ENCODE measurements at regions of chr16 and their contacts with region 1.

Region 1: DNA sequence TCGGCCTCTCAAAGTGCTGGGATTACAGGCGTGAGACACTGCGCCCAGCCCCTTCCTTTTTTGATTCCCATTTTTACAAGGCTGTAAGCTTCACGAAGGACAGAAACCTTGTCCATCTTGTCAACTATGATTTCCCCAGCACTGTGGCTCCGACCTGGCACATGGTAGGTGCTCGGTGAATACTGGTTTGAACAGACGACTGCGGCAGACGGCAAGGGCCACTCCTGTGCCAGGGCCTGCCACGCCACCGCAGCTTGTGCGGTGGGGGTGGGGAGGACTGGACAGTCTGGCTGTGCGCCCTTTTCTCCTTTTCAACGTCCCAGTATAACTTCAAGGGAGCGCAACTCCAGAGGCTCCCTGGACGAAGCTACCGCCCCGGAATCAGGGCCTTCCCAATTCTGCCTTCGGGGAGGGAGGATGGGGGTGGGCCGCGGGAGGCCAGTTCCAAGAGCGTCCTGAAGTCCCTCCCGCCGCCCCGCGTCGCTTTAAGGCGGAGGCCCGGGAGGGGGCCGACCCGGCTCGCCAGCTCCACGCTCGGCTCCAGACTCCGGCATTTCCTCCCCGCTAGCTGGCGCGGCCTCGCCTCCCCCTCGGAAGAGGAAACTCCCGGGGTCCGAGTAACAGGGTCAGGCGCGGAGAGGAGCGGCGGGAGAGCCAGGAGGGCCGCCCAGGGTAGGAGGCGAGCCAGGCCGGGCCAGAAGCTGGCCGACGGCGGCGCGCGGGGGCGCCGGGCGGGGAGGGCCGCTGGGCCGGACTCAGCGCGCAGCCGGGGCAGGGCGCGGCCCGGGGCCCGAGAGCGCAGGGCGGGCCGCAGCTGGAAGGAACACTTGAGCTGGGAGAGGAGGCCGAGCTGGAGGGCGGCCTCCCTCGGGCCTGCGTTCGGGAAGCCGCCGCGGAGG is at the start of gene ITPRIPL2:
- DNase-seq: peak; percentile 80
- H3K4me3 ChIP-seq: peak within 1 kb of the TSS; percentile 57 to 84 (median 74)
- H3K27ac ChIP-seq: peak within 1 kb of the TSS; percentile 50
- H3K4me1 ChIP-seq: peaks cover 44% of the 10 kb centered on the region
- H3K27me3 ChIP-seq: no peaks in the 10 kb centered on the region
- CTCF ChIP-seq: no peak
- total RNA-seq, gene ITPRIPL2: 44.0 to 53.3 TPM

Region 2: GRCh38 chr16:19210280-19210924 is 96.7 kb after region 1 on chr16:
- CTCF ChIA-PET with region 1: no interaction called
- dilution Hi-C with region 1: loop called (anchors 5 kb)
- in situ Hi-C with region 1: no loop called
- intact Hi-C with region 1: no loop called
- DNase-seq: no peak
- H3K4me3 ChIP-seq: no peak overlapping the region
- H3K27ac ChIP-seq: no peak overlapping the region
- H3K4me1 ChIP-seq: no peaks in the 10 kb centered on the region
- H3K27me3 ChIP-seq: no peaks in the 10 kb centered on the region
- CTCF ChIP-seq: no peak